ENCODE measurements at regions of chr10 and their contacts with region 1.

Region 1: DNA sequence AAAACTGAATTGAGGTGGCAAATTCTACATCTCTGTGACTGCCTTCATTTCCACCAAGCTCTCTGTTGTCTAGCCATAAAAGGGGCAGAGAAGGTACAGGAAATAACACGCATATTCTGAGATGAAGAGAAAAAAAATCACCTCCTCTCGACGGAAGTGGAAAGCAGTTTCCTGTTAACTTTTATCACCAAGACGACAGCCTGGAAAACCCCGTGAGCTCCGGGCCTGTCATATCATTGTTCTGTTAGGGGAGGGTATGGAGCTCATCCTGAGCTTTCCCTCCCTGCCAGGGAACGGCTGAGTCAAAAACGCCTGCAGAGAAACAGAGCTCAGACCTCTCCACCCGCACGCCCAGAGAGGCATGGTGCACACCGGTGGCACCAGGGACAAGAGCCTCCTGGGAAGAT is 200.3 kb downstream of the PRPF18 start:
- DNase-seq: no peak

Region 2: GRCh38 chr10:13268841-13269240 is 518.2 kb before region 1 on chr10:
- intact Hi-C with region 1: no loop called
- DNase-seq: no peak

Region 3: DNA sequence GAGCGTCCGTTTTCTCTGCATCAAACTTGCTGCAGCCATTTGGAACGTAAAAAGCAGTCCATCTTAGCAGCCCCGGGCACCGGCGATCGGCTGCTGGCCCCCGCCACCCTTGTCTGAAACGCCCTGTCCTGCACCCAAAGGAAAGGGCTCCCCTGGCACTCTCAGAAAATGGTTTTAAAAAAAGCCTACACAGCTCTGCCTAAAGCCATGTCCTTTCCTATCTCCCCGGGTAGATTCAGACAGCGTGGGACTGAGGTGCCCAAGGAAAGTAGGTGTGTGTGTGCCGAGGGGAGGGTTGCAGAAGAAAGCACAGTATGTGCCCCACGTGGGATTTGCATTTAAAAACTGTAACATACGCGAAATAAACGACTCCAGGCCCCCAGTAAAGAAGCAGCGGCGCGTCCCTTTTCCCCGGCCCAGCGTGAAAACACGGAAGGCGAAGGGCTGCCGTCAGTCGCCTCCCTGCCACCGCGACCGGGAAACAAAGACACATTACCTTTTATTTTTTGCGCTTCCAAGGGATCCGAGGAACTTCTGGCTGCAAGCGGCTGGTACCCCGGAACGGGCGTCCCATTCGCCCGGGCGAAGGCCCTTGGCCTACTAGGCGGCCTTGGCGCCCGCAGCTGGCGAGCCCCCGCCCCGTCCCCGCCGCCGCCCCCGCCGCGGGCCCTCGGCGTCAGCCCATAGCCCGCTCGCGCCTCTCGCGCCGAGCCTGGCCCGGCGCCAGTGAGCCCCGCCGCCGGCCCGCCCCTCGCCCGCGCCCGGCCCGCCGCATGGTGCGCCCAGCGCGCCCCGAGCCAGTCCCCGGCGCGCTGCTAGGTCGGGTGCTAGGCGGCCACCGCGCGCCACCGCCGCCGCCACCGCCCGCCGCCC is 104.3 kb after region 1 on chr10:
- intact Hi-C with region 1: loop called in 1 of 2 experiments (anchors 5 kb)
- DNase-seq: no peak

Region 4: DNA sequence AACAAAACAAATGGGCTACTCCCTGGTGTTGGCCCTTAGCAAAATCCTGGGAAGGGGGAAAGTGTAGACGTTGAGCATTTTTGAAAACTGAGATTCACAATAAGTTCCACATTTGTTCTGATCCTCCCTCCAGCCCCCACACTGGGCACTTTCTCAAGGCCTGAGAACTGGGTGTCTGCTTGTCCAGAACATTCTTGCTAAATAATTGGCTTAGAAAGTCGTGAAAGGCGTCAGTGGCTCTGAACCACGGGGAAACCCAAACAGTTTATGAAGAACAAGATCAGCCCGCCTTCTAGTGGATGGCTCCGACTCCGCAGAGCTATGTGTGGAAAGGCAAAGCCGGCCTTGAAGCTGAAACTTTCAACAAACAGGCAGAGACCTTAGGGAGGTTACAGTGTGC is 169.8 kb after region 1 on chr10:
- intact Hi-C with region 1: loop called in 1 of 2 experiments (anchors 5 kb)
- DNase-seq: peak; percentile 92

Region 5: GRCh38 chr10:14093730-14094484 is 306.9 kb after region 1 on chr10:
- intact Hi-C with region 1: loop called (anchors 5 to 10 kb)
- DNase-seq: no peak

Region 6: GRCh38 chr10:14247377-14248116 is 460.5 kb after region 1 on chr10:
- intact Hi-C with region 1: no loop called
- DNase-seq: no peak